A549 (cell line): ENCODE measurements at regions of chr3 and their contacts with region 1.

Region 1: DNA sequence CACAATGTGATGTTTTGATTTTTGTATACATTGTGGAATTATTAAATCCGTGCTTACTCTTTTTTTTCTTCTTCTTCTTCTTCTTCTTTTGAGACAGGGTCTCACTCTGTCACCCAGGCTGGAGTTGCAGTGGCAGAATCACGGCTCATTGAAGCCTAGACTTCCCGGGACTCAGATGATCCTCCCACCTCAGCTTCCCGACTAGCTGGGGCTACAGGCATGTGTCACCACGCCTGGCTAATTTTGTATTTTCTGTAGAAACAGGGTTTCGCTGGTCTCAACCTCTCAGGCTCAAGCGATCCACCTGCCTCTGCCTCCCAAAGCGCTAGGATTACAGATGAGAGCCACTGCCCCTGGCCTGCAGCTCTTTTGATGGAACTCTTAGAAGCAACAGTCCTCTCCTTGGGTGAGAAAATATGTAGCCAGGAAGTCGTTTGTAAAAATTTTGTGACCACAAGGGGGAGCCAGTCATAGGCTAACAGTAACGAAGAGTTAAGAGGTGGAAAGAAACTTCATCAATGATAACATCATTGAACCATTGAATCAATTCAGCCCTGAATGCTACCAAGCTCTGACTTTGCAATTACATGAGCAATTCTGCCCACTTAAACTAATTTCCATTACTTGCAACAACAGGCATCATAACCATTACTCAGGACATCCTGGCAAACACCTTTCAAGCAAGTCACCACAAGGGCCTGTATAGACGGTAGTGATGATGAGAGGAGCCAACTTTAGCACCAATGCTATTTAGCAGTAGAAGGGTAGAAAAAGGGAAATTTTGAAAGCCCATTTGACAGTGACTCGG is 16.7 kb upstream of the CMTM7 start:
- DNase-seq: peak; percentile 54 to 71
- ATAC-seq: peak; percentile 85 to 94
- H3K4me3 ChIP-seq: no peak overlapping the region
- H3K27ac ChIP-seq: no peak overlapping the region
- H3K4me1 ChIP-seq: no peaks in the 10 kb centered on the region
- CTCF ChIP-seq: peak; percentile 75
- EP300 ChIP-seq: no peak
- POLR2A ChIP-seq: no peak
- RAD21 ChIP-seq: peak; percentile 51 to 55

Region 2: DNA sequence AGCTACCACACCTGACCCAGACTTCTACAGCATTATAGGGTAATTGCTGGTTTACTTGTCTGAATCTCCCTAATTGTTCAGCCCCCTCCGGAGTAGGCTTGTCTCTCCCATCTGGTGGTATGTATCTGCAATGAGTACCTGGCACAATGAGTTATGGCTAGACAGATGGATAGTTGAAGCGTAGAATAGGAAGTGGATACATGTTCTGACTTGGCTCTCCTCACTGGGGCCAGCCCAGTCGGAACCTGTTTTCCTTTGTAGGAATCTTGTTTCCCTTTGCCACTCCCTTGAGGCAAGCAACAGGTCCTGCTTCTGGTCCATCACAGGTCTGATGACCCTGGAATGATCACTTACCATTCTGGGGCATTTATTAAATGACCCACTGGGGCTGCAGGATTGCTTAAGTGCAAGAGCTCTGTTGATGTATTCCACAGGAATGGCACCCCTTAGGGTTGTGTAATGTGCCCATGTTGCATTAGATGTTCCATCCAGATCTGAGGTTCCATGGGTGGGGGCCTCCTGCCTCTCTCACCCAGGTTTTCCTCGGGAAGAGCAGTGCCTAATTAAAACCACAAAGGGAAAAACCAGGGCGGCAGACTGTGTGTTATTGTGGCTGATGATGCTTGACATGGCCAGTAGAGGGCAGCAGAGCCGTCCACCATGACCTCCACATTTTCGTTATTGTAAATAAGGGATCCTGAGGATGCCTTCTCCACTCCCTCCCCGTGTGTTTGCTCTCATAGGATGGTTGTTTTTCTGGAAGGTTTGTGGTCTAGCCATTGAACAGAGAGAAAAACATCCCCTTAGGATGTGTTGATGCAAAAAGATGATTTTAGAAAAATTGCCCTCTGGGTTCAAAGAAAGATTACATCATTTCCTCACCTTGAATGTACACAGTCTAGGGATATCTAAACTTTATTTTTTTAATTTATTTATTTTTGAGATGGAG is 78.5 kb before region 1 on chr3:
- CTCF ChIA-PET with region 1: interaction called, 11 read pairs
- POLR2A ChIA-PET with region 1: no interaction called
- DNase-seq: peak; percentile 67 to 86
- ATAC-seq: peak; percentile 91 to 97
- H3K4me3 ChIP-seq: no peak overlapping the region
- H3K27ac ChIP-seq: peak overlapping the region in 1 of 2 experiments; percentile 14; a peak in 3 of 6 replicates
- H3K4me1 ChIP-seq: peaks cover 10% of the 10 kb centered on the region; the same call in 1 of the 3 replicates
- CTCF ChIP-seq: peak; percentile 89
- EP300 ChIP-seq: no peak
- POLR2A ChIP-seq: no peak
- RAD21 ChIP-seq: peak; percentile 74 to 76

Region 3: DNA sequence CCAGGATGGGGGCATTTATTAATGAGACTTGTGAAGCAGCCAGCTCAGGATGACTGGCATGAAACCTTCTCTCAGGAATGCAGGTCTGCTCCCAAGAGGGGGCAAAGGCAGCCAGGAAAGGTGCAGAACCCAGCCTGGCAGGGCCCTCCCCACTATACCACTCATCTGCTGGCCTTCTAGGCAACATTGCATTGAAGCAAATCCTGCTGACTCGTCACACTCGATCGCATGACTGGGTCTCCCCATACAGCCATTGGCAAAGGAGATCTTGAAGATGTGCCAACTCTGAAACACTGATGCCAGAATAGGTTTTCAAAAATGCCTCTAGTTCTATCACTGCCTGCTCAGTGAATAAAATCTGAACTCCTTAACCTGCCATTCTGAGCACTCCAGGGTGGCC is 49.0 kb before region 1 on chr3:
- CTCF ChIA-PET with region 1: no interaction called
- POLR2A ChIA-PET with region 1: no interaction called
- DNase-seq: no peak
- ATAC-seq: no peak
- H3K4me3 ChIP-seq: no peak overlapping the region
- H3K27ac ChIP-seq: no peak overlapping the region
- H3K4me1 ChIP-seq: no peaks in the 10 kb centered on the region
- CTCF ChIP-seq: no peak
- EP300 ChIP-seq: no peak
- POLR2A ChIP-seq: no peak
- RAD21 ChIP-seq: no peak

Region 4: DNA sequence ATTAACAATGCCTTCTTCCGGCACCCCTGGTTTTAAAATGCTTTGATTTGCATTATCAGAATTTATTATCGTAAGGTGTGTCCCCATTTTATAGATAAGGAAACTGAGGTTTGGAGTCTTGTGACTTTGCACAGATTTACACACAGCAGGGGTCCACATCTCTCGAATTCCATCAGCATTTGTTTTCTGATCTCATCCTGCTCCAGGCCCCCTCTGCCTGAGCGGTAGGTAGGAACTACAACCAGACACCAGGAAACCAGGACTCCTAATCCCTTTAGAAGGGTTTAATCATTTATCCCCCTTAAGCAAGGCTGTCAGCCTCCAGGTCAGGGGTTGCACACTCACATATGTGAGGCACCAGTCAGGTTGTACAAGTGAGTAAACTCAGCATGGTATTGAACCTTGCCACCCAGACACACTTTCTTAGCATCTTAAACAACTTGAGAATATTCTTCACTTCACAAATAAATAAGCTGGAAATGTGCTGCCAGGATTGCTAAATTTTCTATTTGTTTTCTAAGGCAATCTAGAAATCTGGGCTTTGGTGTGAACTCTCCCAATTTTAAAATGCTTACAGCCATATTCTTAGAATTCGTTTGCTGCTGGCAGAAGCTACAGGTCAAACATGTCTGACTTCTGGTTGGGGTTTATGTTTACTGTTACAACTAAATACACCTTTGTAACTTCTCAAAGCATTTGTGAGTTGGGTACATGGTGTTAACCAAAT is 15.1 kb before region 1 on chr3:
- CTCF ChIA-PET with region 1: interaction called, 44 read pairs
- POLR2A ChIA-PET with region 1: no interaction called
- DNase-seq: peak; percentile 15 to 22
- ATAC-seq: peak in 1 of 2 experiments; percentile 51; a peak in 2 of 6 replicates
- H3K4me3 ChIP-seq: no peak overlapping the region
- H3K27ac ChIP-seq: no peak overlapping the region
- H3K4me1 ChIP-seq: 0 out of 3 replicates have a peak, but pooled peaks cover 4% of the 10 kb centered on the region
- CTCF ChIP-seq: no peak
- EP300 ChIP-seq: no peak
- POLR2A ChIP-seq: no peak
- RAD21 ChIP-seq: no peak

Region 5: DNA sequence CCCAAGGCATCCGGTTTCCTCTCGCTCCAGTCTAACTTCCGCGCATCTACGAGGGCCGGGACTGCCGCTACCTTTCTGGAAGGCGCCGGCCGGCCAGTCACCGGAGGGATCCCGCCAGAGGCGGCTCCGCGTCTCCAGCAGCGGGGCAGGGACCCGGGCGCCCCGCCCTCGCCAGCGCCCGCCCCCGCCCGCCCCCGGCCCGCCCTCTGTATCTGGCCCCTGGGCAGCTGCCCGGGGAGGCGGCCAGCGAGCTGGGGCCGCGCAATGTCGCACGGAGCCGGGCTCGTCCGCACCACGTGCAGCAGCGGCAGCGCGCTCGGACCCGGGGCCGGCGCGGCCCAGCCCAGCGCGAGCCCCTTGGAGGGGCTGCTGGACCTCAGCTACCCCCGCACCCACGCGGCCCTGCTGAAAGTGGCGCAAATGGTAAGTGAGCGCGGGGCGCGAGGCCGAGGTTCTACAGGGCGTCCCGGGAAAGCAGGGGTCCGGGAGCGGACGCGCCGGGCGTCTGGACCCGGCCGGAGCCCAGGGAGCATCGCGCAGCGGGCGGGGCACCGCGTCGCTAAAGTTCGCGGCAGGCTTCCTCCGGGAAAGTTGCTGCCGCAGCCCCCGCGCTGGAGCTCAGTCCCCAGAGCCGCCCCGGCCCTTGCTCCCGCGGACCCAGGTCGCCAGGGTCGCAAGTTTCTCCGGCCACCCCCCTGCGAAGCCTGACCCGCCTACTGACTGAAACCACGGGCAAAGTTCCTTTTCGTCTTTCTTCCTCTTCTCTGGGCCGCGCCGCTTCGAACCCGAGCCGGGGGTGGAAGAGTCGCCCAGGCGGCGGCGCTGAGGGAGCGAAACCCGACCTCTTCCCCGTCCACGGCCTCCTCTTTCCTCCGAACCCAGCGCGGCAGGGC is 16.9 kb after region 1 on chr3 and contains the start of gene CMTM7:
- CTCF ChIA-PET with region 1: interaction called, 33 read pairs
- POLR2A ChIA-PET with region 1: no interaction called
- DNase-seq: peak; percentile 43 to 72
- ATAC-seq: peak; percentile 91 to 92
- H3K4me3 ChIP-seq: peak within 1 kb of the TSS; percentile 88
- H3K27ac ChIP-seq: peak within 1 kb of the TSS; percentile 87 to 91
- H3K4me1 ChIP-seq: peaks cover 5% of the 10 kb centered on the region; the same call in 1 of the 3 replicates
- CTCF ChIP-seq: no peak
- EP300 ChIP-seq: no peak
- POLR2A ChIP-seq: peak; percentile 97
- RAD21 ChIP-seq: no peak
- polyA plus RNA-seq, gene CMTM7: 18.7 and 27.1 TPM in 2 replicates

Region 6: GRCh38 chr3:32401556-32402081 is 26.6 kb after region 1 on chr3:
- CTCF ChIA-PET with region 1: interaction called, 33 read pairs
- POLR2A ChIA-PET with region 1: no interaction called
- DNase-seq: peak; percentile 52 to 64
- ATAC-seq: peak; percentile 91 to 93
- H3K4me3 ChIP-seq: peak overlapping the region; percentile 42
- H3K27ac ChIP-seq: peak overlapping the region; percentile 92 to 97
- H3K4me1 ChIP-seq: peaks cover 14% of the 10 kb centered on the region; the same call in 2 of the 3 replicates
- CTCF ChIP-seq: no peak
- EP300 ChIP-seq: no peak
- POLR2A ChIP-seq: no peak; the same call in 1 of the 2 replicates
- RAD21 ChIP-seq: no peak

Region 7: DNA sequence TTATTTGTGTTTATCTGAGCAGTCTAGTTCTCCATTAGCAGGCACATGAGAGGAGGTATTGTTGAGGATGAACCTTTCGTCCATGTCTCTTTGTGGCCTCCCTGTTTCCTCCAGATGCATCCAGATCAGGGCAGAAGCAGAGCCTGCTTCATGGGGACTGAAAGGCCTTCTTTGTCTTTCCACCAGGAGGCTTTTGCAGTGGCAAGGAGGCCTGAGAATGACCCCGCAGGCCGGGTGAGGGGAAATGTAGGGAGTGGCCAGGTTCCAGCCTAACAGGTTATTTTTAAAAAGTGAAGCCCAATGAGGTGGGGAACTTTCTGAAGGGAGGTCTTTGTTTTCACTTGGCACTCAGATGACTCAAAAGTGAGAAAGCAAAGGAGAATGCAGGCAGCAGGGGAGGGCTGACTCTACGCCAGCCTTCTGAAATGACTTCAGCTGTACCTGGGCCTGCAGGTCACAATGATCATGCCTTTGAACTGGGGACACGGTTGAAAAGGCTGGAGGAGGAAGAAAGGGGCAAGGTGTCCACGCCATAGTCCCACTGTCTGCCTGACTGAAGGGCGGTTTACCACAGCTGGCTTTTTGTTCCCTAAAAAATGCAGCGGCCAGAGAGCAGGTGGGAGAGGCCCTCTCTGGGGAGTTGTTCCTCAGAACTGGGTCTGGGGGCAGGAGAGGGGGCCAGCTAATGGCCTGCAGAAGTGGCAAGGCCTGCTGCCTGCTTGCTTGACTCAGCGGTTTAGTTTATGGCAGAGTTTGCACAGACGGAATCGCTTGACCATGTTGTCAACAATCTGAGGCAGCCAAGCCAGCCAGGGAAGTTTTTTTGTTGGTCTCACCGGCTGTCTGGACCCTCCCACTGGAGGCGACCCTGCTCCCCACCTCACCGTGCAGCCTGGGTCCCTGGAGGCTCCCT is 45.4 kb after region 1 on chr3:
- CTCF ChIA-PET with region 1: no interaction called
- POLR2A ChIA-PET with region 1: no interaction called
- DNase-seq: peak; percentile 43 to 65
- ATAC-seq: peak; percentile 75 to 88
- H3K4me3 ChIP-seq: no peak overlapping the region
- H3K27ac ChIP-seq: peak overlapping the region in 1 of 2 experiments; percentile 54; a peak in 3 of 6 replicates
- H3K4me1 ChIP-seq: peaks cover 32% of the 10 kb centered on the region
- CTCF ChIP-seq: no peak
- EP300 ChIP-seq: no peak
- POLR2A ChIP-seq: no peak
- RAD21 ChIP-seq: no peak